Head of caudate nucleus (tissue), 42 donors: ENCODE measurements at regions of chr11 and their contacts with region 1.

Region 1: DNA sequence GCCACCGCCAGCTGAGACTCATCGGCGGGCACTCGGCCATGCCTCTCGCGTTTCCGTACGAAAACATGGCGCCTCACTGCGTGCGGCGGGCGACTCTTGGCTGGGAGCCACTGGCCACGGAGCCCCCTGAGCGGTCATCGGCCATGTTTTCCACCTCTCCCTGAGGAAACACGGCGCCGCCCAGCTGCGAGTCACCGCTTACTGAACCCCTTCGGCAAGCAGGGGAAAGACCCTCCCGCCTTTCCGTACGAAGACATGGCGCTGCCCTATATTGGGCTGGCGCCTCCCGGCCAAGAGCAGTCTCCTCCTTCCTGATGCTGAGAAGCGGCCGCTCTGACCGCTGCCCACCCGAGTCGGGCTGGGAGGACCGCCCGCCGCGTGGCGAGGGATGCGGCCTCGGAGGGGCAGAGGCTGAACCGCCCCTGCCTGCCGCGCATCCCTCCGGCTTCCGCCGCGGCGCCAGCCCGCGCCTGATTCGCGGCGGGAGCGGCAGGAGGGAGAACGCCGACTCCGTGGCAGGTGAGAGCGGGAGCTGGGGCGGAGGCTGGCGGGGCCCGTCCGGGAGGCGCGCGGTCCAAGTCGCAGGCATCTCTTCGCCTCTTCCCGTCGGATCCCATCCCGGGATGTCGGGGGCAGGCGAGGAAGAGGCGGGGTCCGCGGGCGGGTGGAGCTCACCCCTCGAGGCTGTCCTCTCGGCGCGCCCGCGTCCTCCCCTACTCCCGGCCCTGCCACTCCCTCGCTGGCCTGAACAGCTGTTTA is at the start of gene TCP11L1:
- DNase-seq: peak; percentile 70 to 97 (median 94)

Region 2: DNA sequence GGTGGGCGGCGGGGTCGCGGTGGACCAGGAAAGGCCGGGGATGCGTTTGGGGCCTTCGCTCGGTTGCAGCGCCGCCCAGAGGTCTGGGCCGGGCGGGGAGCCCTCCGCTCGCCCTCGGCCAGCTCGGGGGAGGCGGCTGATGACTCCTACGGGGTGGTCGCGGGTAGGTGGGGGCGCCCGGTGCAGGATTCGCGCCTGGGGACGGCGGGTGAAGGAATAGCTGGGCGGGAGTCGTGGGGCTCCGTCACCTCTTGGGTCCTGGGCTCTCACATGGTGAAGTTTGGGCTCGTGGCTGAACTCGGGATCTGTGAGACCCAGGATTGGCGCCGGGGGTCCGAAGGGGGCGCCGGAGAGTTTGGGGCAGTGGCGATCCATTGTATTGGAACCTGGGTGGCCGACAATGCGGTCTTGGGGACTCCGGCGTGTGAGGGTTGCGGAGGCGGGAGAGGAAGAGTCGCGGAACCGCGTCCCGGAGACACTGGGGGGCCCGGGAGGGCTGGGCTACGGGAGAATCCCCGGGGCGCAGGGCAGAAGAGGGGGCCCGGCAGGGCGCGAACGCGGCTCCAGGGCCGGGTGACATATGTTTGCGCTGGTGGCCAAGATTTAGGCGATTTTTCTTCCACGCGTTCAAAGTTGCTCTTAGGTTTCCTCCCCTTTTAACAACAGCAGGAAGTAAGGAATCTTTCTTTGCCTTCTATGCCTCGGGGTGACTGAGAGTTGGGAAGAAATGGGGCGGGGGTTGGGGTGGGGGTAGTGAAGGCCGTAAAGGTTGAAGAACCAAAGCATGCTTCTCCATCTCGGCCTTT is 145.9 kb before region 1 on chr11:
- intact Hi-C with region 1: loop called (anchors 10 kb)
- DNase-seq: peak in 41 of 42 donors; percentile 9 to 74 (median 54)

Region 3: GRCh38 chr11:33015621-33016551 is 23.6 kb before region 1 on chr11 and contains the start of gene DEPDC7:
- intact Hi-C with region 1: loop called (anchors 2 kb)
- DNase-seq: peak; percentile 90 to 97 (median 94)

Region 4: DNA sequence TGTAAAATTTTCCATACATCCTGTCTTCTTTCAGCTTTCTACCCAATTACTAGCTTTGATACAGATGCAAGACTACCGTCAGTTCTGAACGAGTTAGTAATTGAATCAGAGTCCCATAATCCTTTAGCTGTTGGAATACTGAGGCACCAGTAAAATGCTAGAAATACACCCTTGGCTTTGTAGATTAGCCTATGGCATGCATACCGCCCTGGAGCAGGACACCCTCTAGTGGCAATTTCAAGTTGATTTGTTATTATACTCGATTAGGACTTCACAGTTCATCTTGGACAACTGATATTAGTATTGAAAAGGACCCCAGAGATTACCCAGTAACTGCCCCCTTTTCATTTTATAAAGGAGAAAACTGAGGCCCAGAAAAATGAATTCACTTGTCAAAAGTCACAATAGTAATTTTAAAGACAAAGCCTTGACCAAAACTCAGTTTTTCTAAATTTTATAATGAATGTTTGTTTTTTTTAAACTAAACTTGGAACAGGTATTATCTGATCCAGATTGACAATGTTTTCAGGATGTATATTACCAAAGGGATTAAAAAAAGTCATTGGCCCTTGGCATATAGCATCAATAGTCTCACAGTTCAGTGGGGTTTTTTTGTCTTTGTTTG is 290.4 kb after region 1 on chr11:
- intact Hi-C with region 1: no loop called
- DNase-seq: peak in 37 of 42 donors; percentile 22 to 82 (median 48)